ENCODE measurements at regions of chr7 and their contacts with region 1.

Region 1: DNA sequence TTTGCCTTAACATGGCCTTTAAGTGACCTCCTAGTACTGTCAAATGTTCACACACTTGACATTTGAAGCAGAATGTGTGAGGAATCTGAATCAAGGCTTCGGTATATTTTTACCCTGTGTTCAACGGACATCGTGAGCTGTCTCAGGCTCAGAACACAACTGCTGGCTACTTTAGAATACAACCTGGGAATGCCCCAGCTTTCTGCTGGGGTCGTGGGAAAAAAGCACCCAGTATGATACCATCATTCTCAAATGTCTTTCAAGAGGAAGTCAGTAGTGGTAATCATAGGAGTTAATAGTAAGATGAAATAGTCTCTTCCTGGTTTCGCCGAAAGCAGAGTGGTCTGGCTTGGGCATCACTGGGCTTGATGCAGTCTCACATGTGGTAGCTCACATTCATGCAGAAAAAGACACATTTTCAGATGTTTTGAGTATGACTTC is 67.2 kb downstream of the CREB5 start:
- DNase-seq: no peak
- ATAC-seq: no peak
- H3K4me3 ChIP-seq: no peak overlapping the region
- H3K27ac ChIP-seq: no peak overlapping the region
- H3K4me1 ChIP-seq: no peaks in the 10 kb centered on the region
- H3K27me3 ChIP-seq: no peaks in the 10 kb centered on the region

Region 2: DNA sequence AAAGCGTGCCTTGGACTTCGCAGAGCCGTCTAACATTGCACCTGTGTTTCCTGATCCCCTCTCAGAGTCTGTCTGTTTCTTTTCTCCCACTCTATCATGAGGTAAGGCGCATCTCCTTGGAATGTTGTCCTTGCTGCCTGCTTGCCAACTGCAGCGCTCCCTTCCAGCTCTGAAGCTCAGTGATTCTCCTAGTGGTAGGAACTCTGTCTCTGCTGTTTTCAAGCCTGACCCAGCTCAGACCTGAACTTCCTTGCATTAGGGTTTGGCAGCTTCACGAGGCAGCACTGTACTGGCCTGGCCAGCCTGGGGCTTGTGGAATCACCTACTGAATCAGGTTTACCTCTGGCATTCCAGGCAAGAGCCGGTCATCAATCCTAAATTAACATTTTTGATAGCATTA is 56.7 kb after region 1 on chr7:
- intact Hi-C with region 1: loop called in 1 of 4 experiments (anchors 10 kb)
- DNase-seq: peak in 1 of 3 donors; percentile 48
- ATAC-seq: no peak
- H3K4me3 ChIP-seq: no peak overlapping the region
- H3K27ac ChIP-seq: no peak overlapping the region
- H3K4me1 ChIP-seq: peaks cover 6% of the 10 kb centered on the region
- H3K27me3 ChIP-seq: no peaks in the 10 kb centered on the region